Caco-2 (cell line): ENCODE measurements at regions of chr10 and their contacts with region 1.

Region 1: GRCh38 chr10:80187465-80188409 is 17.6 kb downstream of the ANXA11 start:
- DNase-seq: no peak
- H3K4me3 ChIP-seq: no peak overlapping the region
- H3K4me3 Mint-ChIP-seq: no peak overlapping the region
- H3K27ac Mint-ChIP-seq: no peak overlapping the region
- H3K4me1 ChIP-seq: 0 out of 2 replicates have a peak, but pooled peaks cover 5% of the 10 kb centered on the region
- H3K4me1 Mint-ChIP-seq: peaks cover 20% of the 10 kb centered on the region
- H3K27me3 ChIP-seq: no peaks in the 10 kb centered on the region
- H3K27me3 Mint-ChIP-seq: no peaks in the 10 kb centered on the region
- CTCF ChIP-seq: no peak

Region 2: GRCh38 chr10:80168679-80169380 is 18.9 kb before region 1 on chr10:
- CTCF ChIA-PET with region 1: no interaction called
- POLR2A ChIA-PET with region 1: no interaction called
- intact Hi-C with region 1: no loop called
- DNase-seq: peak in 1 of 2 experiments; percentile 29
- H3K4me3 ChIP-seq: no peak overlapping the region
- H3K4me3 Mint-ChIP-seq: no peak overlapping the region
- H3K27ac Mint-ChIP-seq: no peak overlapping the region
- H3K4me1 ChIP-seq: peaks cover 2% of the 10 kb centered on the region
- H3K4me1 Mint-ChIP-seq: peaks cover 27% of the 10 kb centered on the region
- H3K27me3 ChIP-seq: no peaks in the 10 kb centered on the region
- H3K27me3 Mint-ChIP-seq: no peaks in the 10 kb centered on the region
- CTCF ChIP-seq: peak; percentile 28 to 37

Region 3: DNA sequence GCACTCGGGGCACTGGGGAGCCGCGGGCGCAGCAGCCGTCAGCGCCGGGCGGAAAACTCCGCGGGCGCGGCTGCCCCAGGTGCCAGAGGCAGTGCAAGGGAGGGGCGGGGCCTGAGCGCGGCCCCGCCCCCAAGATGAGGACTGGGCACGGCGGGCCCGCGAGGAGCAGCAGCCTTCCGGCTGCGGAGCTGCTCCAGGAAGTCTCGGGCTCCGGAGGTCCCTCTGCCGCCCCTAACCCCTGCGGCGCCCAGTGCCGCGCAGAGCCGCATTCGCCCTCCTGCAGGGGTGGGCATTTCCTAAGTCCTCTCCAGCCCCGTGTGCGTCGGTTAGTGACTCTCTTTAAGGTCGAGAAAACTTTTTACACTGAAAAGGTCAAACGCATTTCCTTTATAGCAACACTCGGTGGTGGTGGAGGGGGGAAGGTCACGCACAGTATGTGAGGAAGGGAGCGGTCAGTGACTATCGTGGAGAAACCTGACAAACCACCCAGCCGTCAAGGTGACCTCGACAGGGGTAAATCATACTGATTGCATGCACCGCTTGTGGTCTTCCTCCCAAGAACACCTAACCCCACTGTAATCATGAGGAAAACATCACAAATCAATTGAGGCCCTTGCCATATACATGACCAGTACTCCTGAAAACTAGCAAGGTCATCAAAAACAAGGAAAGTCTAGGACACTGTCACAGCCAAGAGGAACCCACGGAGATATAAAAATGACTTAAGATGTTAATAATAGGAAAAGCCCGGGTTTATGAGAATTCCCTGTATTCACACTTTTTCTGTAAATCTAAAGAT is 17.9 kb after region 1 on chr10 and contains the start of gene ANXA11:
- CTCF ChIA-PET with region 1: no interaction called
- POLR2A ChIA-PET with region 1: no interaction called
- intact Hi-C with region 1: loop called (anchors 1 kb)
- DNase-seq: peak; percentile 89 to 90
- H3K4me3 ChIP-seq: peak within 1 kb of the TSS; percentile 84
- H3K4me3 Mint-ChIP-seq: peak within 1 kb of the TSS; percentile 78
- H3K27ac Mint-ChIP-seq: peak within 1 kb of the TSS; percentile 100
- H3K4me1 ChIP-seq: peaks cover 48% of the 10 kb centered on the region
- H3K4me1 Mint-ChIP-seq: peaks cover 61% of the 10 kb centered on the region
- H3K27me3 ChIP-seq: no peaks in the 10 kb centered on the region
- H3K27me3 Mint-ChIP-seq: no peaks in the 10 kb centered on the region
- CTCF ChIP-seq: peak in 1 of 2 experiments; percentile 3
- total RNA-seq, gene ANXA11: 316 and 327 TPM in 2 replicates